Sigmoid colon (tissue), 7 donors: ENCODE measurements at regions of chr12 and their contacts with region 1.

Region 1: GRCh38 chr12:55073043-55074022 is 52.9 kb upstream of the OR9K2 start:
- DNase-seq: peak; percentile 79
- H3K4me3 ChIP-seq: no peak overlapping the region
- H3K27ac ChIP-seq: no peak overlapping the region
- H3K4me1 ChIP-seq: no peaks in the 10 kb centered on the region
- H3K27me3 ChIP-seq: peaks cover 0 to 5% (median 0%) of the 10 kb centered on the region in 3 donors
- CTCF ChIP-seq: peak; percentile 36 to 81 (median 64)
- EP300 ChIP-seq: no peak
- POLR2A ChIP-seq: no peak

Region 2: DNA sequence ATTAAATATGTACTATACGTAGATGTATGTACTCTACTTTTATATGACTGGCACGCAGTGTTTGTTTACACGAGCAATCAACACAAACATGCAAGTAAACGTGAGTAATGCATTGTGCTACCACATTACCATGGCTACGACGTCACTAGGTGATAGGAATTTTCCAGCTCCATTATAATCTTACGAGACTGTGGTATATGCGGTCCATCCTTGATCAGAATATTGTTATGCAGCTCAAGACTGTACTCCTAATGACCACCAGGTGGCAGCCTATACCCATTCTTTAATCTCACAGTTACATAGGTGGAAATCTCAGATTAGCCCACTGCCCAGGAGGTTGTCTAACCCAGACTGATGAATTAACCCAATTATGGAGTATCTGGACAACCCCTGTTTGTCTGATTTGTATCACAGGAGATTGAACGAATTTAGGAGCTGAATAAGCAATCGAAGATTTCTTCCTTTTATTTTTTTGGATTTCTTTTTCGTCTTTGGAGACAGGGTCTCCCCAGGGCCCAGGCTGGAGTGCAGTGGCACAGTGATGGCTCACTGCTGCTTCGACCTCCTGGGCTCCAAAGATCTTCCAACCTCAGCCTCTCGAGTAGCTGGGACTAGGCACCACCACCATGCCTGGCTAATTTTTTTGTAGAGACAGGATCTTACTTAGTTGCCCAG is 80.0 kb before region 1 on chr12:
- intact Hi-C with region 1: loop called (anchors 1 kb)
- DNase-seq: no peak
- H3K4me3 ChIP-seq: no peak overlapping the region
- H3K27ac ChIP-seq: no peak overlapping the region
- H3K4me1 ChIP-seq: peaks cover 0 to 8% (median 0%) of the 10 kb centered on the region in 4 donors
- H3K27me3 ChIP-seq: no peaks in the 10 kb centered on the region
- CTCF ChIP-seq: peak; percentile 44 to 88 (median 75)
- EP300 ChIP-seq: no peak
- POLR2A ChIP-seq: no peak

Region 3: GRCh38 chr12:55220725-55221124 is 147.4 kb after region 1 on chr12 and contains the start of gene OR10A7:
- intact Hi-C with region 1: no loop called
- DNase-seq: no peak
- H3K4me3 ChIP-seq: no peak within 1 kb of the TSS
- H3K27ac ChIP-seq: no peak within 1 kb of the TSS
- H3K4me1 ChIP-seq: no peaks in the 10 kb centered on the region
- H3K27me3 ChIP-seq: no peaks in the 10 kb centered on the region
- CTCF ChIP-seq: no peak
- EP300 ChIP-seq: no peak
- POLR2A ChIP-seq: no peak
- total RNA-seq, gene OR10A7: not detected

Region 4: DNA sequence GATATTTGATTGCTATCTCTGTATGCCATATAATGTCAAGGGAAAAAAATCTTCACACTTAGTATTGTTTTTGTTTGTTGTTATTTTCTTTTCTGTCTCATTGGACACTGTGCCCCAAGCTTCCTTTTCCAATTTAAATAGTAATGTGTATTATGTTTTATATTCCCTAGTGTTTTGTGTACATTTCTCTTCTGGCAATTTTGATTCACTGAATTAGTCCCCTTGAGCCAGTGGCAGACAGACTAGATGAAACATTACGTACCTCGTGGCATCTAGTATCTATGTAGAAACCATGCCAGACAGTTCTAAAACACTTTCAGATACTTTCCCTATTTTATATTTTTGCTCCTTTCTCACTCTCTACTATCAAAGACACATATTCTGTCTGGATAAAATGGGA is 240.7 kb after region 1 on chr12 and contains the start of gene OR6C1:
- intact Hi-C with region 1: no loop called
- DNase-seq: no peak
- H3K4me3 ChIP-seq: no peak within 1 kb of the TSS
- H3K27ac ChIP-seq: no peak within 1 kb of the TSS
- H3K4me1 ChIP-seq: no peaks in the 10 kb centered on the region
- H3K27me3 ChIP-seq: no peaks in the 10 kb centered on the region
- CTCF ChIP-seq: no peak
- EP300 ChIP-seq: no peak
- POLR2A ChIP-seq: no peak
- total RNA-seq, gene OR6C1: not detected

Region 5: DNA sequence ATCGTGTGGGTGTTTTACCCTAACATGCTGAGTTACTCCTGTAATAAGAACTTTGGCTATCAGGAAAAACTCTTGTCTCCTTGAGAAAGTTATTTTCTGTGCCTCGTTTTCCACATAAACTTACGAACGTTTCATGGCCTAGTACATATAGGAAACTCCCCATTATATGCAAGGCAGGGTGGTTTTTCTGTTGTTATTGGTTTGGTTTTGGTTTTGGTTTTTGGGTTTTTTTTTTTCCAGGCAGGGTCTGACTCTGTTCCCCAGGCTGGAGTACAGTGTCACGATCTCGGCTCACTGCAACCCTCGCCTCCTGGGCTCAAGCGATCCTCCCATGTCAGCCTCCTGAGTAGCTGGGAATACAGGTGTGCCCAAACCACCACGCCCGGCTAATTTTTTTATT is 262.7 kb after region 1 on chr12:
- intact Hi-C with region 1: no loop called
- DNase-seq: no peak
- H3K4me3 ChIP-seq: no peak overlapping the region
- H3K27ac ChIP-seq: no peak overlapping the region
- H3K4me1 ChIP-seq: no peaks in the 10 kb centered on the region
- H3K27me3 ChIP-seq: no peaks in the 10 kb centered on the region
- CTCF ChIP-seq: no peak
- EP300 ChIP-seq: no peak
- POLR2A ChIP-seq: no peak